Esophagus squamous epithelium (tissue), 5 donors: ENCODE measurements at regions of chr9 and their contacts with region 1.

Region 1: GRCh38 chr9:127943731-127944144 is 6.1 kb upstream of the DPM2 start:
- DNase-seq: no peak
- H3K4me3 ChIP-seq: no peak overlapping the region
- H3K27ac ChIP-seq: peak overlapping the region; percentile 2 to 56 (median 24)
- H3K4me1 ChIP-seq: peaks cover 0 to 47% (median 3%) of the 10 kb centered on the region in 3 donors
- H3K27me3 ChIP-seq: no peaks in the 10 kb centered on the region
- CTCF ChIP-seq: peak; percentile 86 to 96 (median 92)
- POLR2A ChIP-seq: no peak

Region 2: GRCh38 chr9:127877566-127877998 is 66.2 kb before region 1 on chr9 and contains the start of gene AK1:
- intact Hi-C with region 1: no loop called
- DNase-seq: no peak
- H3K4me3 ChIP-seq: peak within 1 kb of the TSS; percentile 55 to 87 (median 60)
- H3K27ac ChIP-seq: peak within 1 kb of the TSS; percentile 78 to 91 (median 83)
- H3K4me1 ChIP-seq: peaks cover 36 to 57% (median 40%) of the 10 kb centered on the region in 3 donors
- H3K27me3 ChIP-seq: no peaks in the 10 kb centered on the region
- CTCF ChIP-seq: no peak
- POLR2A ChIP-seq: peak in 1 of 4 donors; percentile 45
- total RNA-seq, gene AK1: 11.1 to 36.1 (median 26.8) TPM

Region 3: DNA sequence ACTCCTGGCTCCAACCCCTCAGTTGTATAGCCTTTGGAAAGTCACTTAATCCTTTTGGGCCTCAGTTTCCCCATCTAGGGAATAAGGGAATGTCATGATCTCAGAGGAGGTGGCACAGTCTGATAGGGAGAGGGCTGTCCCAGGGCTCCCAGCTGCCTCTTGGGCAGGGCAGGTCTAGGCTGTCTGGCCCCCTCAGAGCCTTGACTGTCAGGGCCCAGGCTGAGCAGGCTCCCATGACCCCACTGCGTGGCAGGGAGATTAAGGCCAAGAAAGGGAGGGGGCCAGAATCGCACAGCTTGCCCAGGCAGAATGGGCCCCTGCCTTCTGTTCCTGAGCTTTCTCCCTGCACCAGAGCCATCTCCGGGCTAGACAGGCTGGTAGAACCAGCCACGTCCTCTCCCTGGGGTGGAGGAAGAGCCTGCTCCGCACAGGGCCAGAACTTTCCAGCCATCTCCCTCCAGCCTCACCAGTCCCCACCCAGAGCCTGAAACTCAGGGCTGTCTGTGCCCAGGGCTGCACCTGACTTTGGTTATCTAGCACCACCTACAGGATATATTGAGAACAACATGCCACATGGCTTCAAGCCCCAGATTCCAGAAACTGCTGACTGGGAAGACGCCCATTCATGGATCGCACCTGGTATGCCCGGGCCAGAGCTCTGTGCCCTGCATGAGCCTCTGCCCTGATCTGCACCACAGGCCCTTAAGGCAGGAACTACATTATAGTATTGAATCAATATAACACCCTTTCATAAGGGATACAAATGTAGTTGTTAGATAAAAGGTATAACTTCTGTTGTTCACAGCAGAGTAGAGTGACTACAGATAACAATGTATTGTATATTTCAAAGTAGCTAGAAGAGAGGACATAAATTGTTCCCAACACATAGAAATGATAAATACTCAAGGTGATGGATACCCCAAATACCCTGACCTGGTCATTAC is 91.4 kb after region 1 on chr9:
- intact Hi-C with region 1: loop called (anchors 2 kb)
- DNase-seq: no peak
- H3K4me3 ChIP-seq: no peak overlapping the region
- H3K27ac ChIP-seq: peak overlapping the region; percentile 5 to 83 (median 68)
- H3K4me1 ChIP-seq: peaks cover 3 to 24% (median 5%) of the 10 kb centered on the region in 3 donors
- H3K27me3 ChIP-seq: no peaks in the 10 kb centered on the region
- CTCF ChIP-seq: peak; percentile 78 to 98 (median 96)
- POLR2A ChIP-seq: no peak

Region 4: DNA sequence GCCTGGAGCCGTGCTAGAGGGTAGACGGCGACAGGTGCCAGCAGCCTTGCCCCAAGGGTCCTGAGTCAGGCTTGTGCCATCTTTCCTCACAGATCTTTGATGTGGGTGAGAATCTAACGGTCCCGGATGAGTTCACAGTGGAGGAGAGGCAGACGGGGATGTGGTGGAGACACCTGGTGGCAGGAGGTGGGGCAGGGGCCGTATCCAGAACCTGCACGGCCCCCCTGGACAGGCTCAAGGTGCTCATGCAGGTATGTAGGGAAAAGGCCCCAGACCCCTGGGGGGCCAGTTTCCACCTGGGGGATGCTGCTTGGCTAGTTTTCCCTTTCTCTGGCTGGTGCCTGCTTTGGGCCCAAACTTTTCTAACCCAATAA is 159.8 kb after region 1 on chr9:
- intact Hi-C with region 1: loop called (anchors 10 kb)
- DNase-seq: no peak
- H3K4me3 ChIP-seq: no peak overlapping the region
- H3K27ac ChIP-seq: peak overlapping the region in 2 of 4 donors; percentile 31 to 38
- H3K4me1 ChIP-seq: peaks cover 22 to 58% (median 24%) of the 10 kb centered on the region in 3 donors
- H3K27me3 ChIP-seq: no peaks in the 10 kb centered on the region
- CTCF ChIP-seq: peak in 1 of 6 experiments; percentile 18
- POLR2A ChIP-seq: no peak